ENCODE measurements at regions of chr1 and their contacts with region 1.

Region 1: DNA sequence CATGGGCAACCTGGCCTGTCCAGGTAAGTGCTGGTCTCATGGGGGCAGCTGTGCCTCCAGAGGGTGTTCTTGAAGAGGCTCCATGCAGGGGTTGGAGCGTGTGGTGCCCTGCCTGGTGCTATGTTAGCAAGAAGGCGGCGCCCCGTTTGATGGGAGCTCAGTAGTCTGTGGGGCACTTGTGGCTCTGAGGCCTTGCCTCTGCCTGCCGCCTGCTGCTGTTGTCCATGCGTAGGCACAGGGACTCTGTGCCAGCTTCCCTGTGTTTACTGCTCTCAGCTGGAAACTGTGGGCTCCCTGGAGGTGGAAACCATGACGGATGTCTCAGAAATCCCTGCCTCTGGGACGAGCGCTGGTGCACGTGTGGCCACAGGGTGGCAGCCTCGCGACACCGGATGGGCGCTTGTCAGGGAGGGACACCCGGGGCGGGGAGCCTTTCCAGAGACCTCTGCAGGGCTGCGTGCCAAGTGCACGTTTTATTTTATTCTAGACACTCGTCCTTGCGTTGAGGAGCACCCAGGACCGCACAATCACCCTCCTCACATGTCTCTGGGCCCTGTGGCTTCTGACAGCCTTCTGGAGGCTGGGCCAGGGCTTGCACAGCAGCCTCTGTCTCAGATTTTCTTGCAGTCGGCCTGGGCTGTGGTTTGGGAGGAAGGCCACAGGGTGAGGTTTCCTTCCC is 27.1 kb downstream of the SNAP47 start:
- DNase-seq: peak; percentile 83 to 93 (median 91)
- H3K4me3 ChIP-seq: peak overlapping the region in 2 of 7 experiments; percentile 3 to 51
- H3K27ac ChIP-seq: peak overlapping the region in 1 of 2 experiments; percentile 15
- H3K4me1 ChIP-seq: peaks cover 0 to 50% (median 46%) of the 10 kb centered on the region in 4 experiments
- H3K27me3 ChIP-seq: no peaks in the 10 kb centered on the region

Region 2: DNA sequence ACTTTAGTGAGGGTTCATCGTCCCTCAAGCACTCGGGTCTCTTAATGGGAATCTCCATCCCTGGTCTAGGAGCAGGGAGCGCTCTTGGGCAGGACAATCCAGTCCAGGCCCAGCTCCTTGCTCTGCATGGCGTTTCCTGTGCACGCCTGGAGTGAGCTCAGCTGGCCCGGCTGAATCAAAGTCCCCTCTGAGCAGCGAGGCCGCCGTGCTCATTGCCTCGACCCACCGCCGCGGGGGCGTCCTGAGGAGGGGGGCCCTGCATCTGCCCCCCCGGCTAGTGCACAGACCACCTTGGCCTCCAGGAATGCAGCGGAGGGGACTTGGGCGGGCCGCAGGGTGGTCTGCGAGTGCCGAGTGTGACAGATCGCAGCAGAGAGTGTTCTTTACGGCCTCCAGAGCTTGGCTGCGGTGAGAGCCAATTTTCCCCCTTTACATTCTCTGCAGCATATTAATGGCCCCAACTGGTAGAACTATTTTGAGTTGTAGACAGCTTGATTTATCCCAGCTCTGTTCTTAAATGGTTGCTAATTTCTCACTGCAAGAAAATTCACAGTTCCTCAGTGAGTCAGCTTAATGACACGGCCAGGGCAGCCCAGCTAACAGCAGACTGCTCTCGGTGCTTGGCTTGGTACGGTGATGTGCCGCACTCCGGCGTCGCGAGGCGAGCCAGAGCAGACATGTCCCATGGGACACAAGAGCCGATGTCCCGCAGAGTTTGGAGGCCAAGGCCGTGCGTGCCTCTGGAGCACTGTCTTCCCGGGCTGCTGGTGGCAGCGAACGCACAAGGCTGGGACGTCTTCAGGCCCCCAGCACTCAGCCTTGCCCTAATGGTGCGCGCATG is 12.7 kb after region 1 on chr1:
- CTCF ChIA-PET with region 1: interaction called, 15 read pairs
- POLR2A ChIA-PET with region 1: no interaction called
- DNase-seq: no peak
- H3K4me3 ChIP-seq: no peak overlapping the region
- H3K27ac ChIP-seq: no peak overlapping the region
- H3K4me1 ChIP-seq: no peaks in the 10 kb centered on the region
- H3K27me3 ChIP-seq: no peaks in the 10 kb centered on the region

Region 3: DNA sequence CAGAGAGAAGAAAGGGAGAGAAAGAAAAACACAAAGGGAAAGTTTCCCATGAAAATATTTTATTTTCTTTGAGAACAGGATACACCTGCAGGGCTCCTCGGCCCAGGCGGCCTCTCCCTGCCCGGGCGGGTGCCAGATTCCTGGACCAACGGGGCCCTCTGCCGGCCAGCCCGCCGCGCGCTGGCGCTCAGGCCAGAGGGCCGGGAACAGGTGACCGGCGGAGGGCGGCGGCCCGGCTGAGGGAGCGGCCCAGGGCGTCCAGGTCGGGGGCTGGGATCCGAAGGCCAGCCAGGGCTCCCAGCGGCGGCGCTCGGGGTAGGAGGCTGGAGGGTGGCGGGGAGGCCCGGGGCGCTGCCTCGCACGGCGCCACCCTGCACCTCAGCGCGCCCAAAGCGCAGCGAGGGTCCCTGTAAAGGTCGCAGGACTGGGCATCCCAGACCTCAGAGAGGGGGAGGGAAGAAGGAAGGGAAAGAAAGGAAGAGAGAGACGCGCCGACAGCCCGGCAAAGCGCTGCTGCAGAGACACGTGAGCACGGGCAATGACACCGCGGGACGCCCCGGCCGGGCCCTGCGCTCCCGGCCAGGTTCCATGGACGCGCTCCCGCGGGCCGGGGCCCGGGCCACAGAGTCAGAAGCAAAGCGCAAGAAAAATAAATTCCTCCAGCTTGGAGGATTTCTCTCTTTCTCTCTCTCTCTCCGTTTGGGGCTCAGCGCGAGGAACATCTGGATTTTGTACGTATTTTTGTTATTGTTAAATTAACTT is 184.4 kb after region 1 on chr1:
- CTCF ChIA-PET with region 1: interaction called, 29 read pairs
- POLR2A ChIA-PET with region 1: interaction called, 3 read pairs
- DNase-seq: peak in 2 of 3 donors; percentile 55 to 66
- H3K4me3 ChIP-seq: peak overlapping the region; percentile 5 to 78 (median 66)
- H3K27ac ChIP-seq: peak overlapping the region in 1 of 2 experiments; percentile 61
- H3K4me1 ChIP-seq: peaks cover 2 to 32% (median 25%) of the 10 kb centered on the region in 4 experiments
- H3K27me3 ChIP-seq: peaks cover 0 to 34% (median 23%) of the 10 kb centered on the region in 5 experiments

Measured in common myeloid progenitor, CD34-positive (primary cell).